Activated naive CD4-positive, alpha-beta T cell treated with anti-CD3 and anti-CD28 coated beads for 36 hours (primary cell): ENCODE measurements at regions of chr10 and their contacts with region 1.

Region 1: GRCh38 chr10:93554760-93555432 is 11.6 kb upstream of the FFAR4 start:
- DNase-seq: peak; percentile 64
- H3K4me3 Mint-ChIP-seq: no peak overlapping the region
- H3K27ac Mint-ChIP-seq: no peak overlapping the region
- H3K4me1 Mint-ChIP-seq: no peaks in the 10 kb centered on the region
- H3K27me3 Mint-ChIP-seq: peaks cover 10% of the 10 kb centered on the region

Region 2: DNA sequence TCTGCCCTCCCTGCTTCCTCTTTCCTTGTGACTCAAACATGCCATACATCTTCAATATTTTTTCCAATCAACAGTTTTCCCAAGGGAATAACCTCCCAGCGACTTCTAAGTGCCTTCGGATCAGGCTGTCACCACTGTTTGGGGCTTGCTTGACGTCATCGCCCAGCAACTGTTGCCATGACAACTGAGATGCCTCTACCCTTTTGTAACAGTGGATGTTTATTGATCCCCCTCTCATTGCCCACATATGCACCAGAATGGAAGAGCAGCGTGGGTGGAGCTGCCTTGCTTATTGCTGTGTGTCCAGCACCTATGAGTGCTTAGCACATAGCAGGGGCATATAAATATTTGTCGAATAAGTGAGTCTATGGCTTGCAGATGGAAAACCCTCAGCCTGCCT is 25.9 kb after region 1 on chr10:
- CTCF ChIA-PET with region 1: no interaction called
- intact Hi-C with region 1: no loop called
- DNase-seq: no peak
- H3K4me3 Mint-ChIP-seq: no peak overlapping the region
- H3K27ac Mint-ChIP-seq: no peak overlapping the region
- H3K4me1 Mint-ChIP-seq: no peaks in the 10 kb centered on the region
- H3K27me3 Mint-ChIP-seq: peaks cover 2% of the 10 kb centered on the region

Region 3: DNA sequence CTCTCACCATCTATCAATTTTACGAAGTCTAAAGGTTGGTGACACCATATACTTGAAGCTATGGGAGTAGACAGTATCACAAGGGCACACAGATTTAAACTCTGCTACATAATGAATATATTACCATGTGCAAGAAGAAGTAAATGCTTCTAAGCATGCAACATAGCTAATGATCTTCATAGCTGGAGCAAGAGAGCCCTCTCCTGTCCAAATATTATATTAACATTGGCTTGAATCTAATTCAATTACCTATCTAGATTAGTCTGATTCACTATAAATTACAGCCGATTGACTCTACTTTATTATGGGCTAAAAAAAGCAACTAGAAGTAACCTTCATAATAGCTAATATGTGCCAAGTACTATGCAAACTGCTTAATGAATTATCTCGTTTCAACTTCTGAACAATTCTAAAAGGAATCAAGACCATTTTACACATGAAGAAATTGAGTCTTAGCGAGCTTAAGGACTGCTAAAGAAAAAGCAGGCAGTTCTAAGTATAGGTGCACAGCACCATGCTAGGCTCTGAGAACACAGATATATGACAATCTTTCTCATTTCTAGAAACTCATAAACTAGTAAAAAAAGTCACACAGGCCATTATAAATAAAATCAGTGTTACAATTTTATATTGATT is 125.6 kb after region 1 on chr10:
- CTCF ChIA-PET with region 1: interaction called, 4 read pairs
- intact Hi-C with region 1: loop called (anchors 1 kb)
- DNase-seq: no peak
- H3K4me3 Mint-ChIP-seq: no peak overlapping the region
- H3K27ac Mint-ChIP-seq: no peak overlapping the region
- H3K4me1 Mint-ChIP-seq: peaks cover 7% of the 10 kb centered on the region
- H3K27me3 Mint-ChIP-seq: no peaks in the 10 kb centered on the region

Region 4: GRCh38 chr10:93859049-93859655 is 304.3 kb after region 1 on chr10:
- CTCF ChIA-PET with region 1: interaction called, 3 read pairs
- intact Hi-C with region 1: loop called (anchors 1 kb)
- DNase-seq: no peak
- H3K4me3 Mint-ChIP-seq: no peak overlapping the region
- H3K27ac Mint-ChIP-seq: no peak overlapping the region
- H3K4me1 Mint-ChIP-seq: no peaks in the 10 kb centered on the region
- H3K27me3 Mint-ChIP-seq: peaks cover 2% of the 10 kb centered on the region